Psoas muscle (tissue), 8 donors: ENCODE measurements at regions of chr16 and their contacts with region 1.

Region 1: DNA sequence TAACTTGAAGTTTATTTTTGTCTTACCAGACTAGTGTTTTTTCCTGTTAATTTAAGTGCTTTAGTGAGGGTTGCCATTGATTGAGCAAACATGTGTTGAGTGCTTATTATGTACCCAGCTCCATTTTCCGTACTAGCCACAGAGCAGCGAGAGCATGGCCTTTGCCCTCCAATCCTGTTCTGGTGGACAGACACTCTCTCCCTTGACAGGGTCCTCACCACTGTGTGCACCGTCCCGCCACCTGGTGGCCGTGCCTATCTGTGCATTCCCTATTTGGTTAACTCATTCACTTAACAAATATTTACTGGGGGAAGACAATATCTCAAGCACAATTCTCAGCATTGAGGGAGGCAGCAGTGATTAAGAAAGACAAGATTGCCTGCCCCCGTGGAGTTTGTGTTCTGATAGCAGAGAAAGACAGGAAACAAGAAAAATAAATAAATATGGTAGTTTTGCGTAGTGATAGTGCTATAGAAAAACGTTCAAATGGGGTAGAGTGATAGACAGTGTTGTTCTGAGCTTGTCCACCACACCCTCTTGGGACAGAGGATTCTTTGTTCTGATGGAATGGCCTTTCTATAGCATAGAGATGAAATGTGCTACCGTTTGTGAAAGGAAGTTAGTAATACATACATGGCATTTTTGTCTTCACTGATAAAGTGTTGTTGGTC is 13.0 kb downstream of the CDH13 start:
- DNase-seq: peak; percentile 56 to 73
- ATAC-seq: peak; percentile 77 to 83 (median 82)
- H3K4me3 ChIP-seq: no peak overlapping the region
- H3K27ac ChIP-seq: peak overlapping the region; percentile 11
- H3K4me1 ChIP-seq: peaks cover 43% of the 10 kb centered on the region
- H3K27me3 ChIP-seq: no peaks in the 10 kb centered on the region
- CTCF ChIP-seq: peak; percentile 72

Region 2: DNA sequence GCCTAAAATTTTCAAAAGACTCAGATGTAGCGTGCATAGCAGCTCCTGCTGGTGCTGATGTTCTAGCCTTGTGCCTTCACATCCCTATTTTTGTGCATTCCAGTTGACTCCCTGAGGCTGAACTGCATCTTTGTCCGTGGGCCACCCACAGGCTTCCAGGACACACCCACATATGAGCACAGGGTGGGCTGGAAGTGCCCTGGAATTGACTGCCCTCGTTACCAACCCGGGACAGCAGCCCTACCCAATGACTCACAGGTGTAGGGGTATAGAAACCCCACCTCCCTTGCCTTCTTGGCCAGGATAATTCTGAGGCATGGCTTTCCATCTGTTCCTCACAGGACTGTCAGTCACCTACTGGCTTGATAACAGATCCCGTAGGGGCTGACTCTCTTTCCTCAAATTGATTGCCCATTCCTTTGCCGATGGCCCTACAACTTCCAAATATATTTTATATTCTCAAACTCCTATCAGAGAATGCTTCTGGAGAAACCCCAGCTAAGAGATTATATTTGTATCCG is 78.9 kb before region 1 on chr16:
- intact Hi-C with region 1: no loop called
- DNase-seq: no peak
- ATAC-seq: no peak
- H3K4me3 ChIP-seq: no peak overlapping the region
- H3K27ac ChIP-seq: no peak overlapping the region
- H3K4me1 ChIP-seq: no peaks in the 10 kb centered on the region
- H3K27me3 ChIP-seq: no peaks in the 10 kb centered on the region
- CTCF ChIP-seq: no peak

Region 3: DNA sequence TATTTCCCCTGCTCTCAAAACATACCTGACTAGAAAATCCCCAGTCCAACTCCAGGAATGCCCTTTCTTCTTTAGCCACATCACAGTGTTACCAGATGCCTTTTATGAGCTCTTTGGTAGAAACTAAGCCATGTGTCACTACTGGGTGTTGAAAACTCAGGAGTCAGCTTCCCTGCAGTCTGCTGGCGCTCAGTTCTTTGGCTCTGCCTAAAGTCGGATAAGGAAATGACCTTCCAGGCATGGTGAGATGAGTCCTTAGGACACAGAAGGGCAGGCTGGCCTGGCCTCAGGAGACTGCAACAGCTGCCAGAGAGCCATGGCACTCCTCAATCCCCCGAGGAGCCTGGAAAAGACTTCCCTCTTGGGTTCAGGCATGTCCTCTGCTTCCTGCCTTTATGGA is 76.0 kb after region 1 on chr16:
- intact Hi-C with region 1: loop called in 1 of 2 experiments (anchors 5 kb)
- DNase-seq: peak; percentile 43 to 85
- ATAC-seq: peak; percentile 96 to 97 (median 96)
- H3K4me3 ChIP-seq: peak overlapping the region; percentile 19
- H3K27ac ChIP-seq: peak overlapping the region; percentile 70
- H3K4me1 ChIP-seq: peaks cover 33% of the 10 kb centered on the region
- H3K27me3 ChIP-seq: no peaks in the 10 kb centered on the region
- CTCF ChIP-seq: no peak

Region 4: DNA sequence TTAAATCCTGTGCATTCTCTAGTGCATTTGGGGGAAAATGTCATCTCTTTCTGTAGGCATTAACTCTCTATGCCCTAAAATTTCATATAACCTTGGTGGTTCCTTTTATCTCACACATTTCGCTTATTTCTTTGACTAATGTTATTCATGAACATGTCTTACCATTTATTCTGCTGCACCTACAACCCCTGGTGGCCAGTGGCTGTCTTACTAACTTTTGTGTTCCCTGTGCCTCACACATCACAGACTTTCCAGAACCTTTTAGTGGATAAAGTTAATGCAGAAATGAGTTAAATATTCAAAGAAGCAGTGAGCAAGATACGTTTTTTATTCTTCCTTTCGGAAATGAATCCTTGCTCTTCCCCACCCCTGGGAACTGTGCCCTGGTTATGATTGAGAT is 98.9 kb after region 1 on chr16:
- intact Hi-C with region 1: loop called in 1 of 2 experiments (anchors 5 kb)
- DNase-seq: no peak
- ATAC-seq: no peak
- H3K4me3 ChIP-seq: no peak overlapping the region
- H3K27ac ChIP-seq: peak overlapping the region; percentile 91
- H3K4me1 ChIP-seq: peaks cover 54% of the 10 kb centered on the region
- H3K27me3 ChIP-seq: no peaks in the 10 kb centered on the region
- CTCF ChIP-seq: peak; percentile 36

Region 5: GRCh38 chr16:82832821-82833220 is 193.0 kb after region 1 on chr16:
- intact Hi-C with region 1: no loop called
- DNase-seq: no peak
- ATAC-seq: no peak
- H3K4me3 ChIP-seq: no peak overlapping the region
- H3K27ac ChIP-seq: no peak overlapping the region
- H3K4me1 ChIP-seq: no peaks in the 10 kb centered on the region
- H3K27me3 ChIP-seq: no peaks in the 10 kb centered on the region
- CTCF ChIP-seq: no peak

Region 6: DNA sequence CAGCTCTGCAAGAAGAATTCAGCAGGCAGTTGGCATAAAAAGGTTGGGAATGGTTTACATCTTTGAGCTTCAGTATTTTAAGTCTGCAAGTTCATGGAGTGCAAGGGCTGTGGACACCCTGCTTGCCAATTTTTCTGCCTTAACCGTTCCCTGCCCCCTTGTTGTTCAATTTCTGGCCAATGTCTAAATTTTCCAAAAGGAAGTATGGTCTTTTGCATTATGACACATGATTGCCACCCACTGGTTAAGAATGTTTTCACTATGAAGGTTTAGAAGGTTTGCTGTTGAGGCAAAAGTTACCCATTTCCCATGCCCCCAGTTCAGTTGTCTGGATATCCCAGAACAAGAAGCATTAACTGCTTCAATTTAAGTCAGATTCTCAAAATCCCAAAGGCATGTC is 428.9 kb after region 1 on chr16:
- intact Hi-C with region 1: loop called in 1 of 2 experiments (anchors 10 kb)
- DNase-seq: no peak
- ATAC-seq: no peak
- H3K4me3 ChIP-seq: no peak overlapping the region
- H3K27ac ChIP-seq: no peak overlapping the region
- H3K4me1 ChIP-seq: peaks cover 6% of the 10 kb centered on the region
- H3K27me3 ChIP-seq: no peaks in the 10 kb centered on the region
- CTCF ChIP-seq: peak; percentile 25